Ovary (tissue), 10 donors: ENCODE measurements at regions of chr10 and their contacts with region 1.

Region 1: DNA sequence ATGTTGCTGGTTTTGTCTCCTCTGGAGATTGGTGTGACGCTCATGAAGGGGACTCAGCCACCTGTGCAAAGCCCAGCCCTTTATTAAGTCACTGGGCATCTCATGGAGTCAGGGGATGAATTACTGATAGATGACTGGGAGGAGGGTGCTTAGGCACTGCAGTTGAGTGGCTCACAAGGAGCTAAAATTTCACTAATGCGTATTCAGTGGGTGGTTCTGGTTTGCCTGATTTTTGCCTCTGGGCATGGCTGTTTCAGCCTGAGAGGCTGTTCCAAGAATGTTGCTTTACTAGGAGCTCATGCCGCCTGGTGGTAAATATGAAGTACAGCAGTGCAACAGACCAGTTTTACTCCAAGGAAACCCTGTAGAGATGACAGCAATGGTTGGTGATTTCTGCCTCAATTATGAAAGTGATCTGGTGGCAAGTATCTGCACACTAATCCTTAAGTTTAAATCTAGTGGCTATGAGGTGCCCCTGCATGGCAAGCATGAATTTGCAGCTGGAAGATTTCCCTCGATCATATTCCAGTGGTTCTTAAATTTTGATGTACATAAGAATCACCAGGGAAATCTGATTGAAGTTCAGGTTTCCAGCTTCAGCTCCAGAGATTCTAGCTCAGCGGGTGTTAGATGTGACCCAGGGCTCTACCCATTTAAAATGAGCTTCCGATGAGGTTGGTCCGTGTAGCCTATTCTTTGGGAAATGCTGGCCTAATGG is 19.9 kb downstream of the ACTA2 start:
- DNase-seq: peak in 4 of 5 donors; percentile 46 to 71 (median 52)
- H3K4me3 ChIP-seq: no peak overlapping the region
- H3K27ac ChIP-seq: peak overlapping the region in 1 of 2 donors; percentile 28
- H3K4me1 ChIP-seq: no peaks in the 10 kb centered on the region
- H3K27me3 ChIP-seq: no peaks in the 10 kb centered on the region
- CTCF ChIP-seq: peak; percentile 83 to 98 (median 91)
- EP300 ChIP-seq: no peak
- POLR2A ChIP-seq: no peak

Region 2: DNA sequence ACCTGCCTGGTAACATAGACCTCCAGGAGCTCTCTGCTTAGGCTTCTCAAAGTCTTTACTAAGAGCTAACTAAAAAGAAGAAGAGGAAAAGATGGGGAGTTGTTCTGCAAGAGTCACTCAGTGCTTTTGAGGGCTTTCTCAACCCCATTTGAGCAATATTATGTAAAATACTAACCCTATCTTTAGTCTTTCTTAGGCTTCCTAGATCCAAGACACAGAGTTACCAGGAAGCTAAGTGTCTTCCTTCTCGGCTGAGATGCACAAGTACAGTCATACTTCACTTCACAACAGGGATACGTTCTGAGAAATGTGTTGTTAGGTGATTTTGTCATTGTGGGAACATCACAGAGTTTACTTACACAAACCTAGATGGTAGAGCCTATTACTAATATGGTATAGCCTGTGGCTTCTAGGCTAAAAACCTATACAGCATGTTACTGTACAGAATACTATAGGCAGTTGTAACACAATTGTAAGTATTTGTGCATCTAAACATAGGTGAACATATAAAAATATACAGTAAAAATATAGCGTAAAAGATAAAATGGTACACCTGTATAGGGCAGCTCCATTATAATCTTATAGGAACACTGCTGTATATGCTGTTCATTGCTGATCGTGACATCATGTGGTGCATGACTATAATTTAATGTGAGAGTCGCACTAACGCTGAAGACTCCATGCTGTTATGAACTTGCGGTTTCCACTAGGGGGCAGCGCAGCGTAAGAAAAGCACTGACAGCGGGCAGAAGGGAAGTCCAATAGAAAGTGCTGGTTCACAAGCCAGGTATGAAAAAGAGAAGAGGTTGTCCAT is 97.4 kb before region 1 on chr10:
- intact Hi-C with region 1: loop called (anchors 2 to 5 kb)
- DNase-seq: peak; percentile 78 to 91 (median 88)
- H3K4me3 ChIP-seq: no peak overlapping the region
- H3K27ac ChIP-seq: no peak overlapping the region
- H3K4me1 ChIP-seq: no peaks in the 10 kb centered on the region
- H3K27me3 ChIP-seq: no peaks in the 10 kb centered on the region
- CTCF ChIP-seq: peak; percentile 76 to 93 (median 91)
- EP300 ChIP-seq: no peak
- POLR2A ChIP-seq: peak; percentile 25

Region 3: GRCh38 chr10:88880282-88881076 is 52.2 kb before region 1 on chr10:
- intact Hi-C with region 1: loop called in 3 of 4 experiments (anchors 5 kb)
- DNase-seq: peak; percentile 75 to 88 (median 82)
- H3K4me3 ChIP-seq: peak overlapping the region; percentile 86
- H3K27ac ChIP-seq: peak overlapping the region; percentile 93 to 94
- H3K4me1 ChIP-seq: peaks cover 8% of the 10 kb centered on the region
- H3K27me3 ChIP-seq: no peaks in the 10 kb centered on the region
- CTCF ChIP-seq: peak in 1 of 3 donors; percentile 3
- EP300 ChIP-seq: no peak
- POLR2A ChIP-seq: peak; percentile 55

Region 4: DNA sequence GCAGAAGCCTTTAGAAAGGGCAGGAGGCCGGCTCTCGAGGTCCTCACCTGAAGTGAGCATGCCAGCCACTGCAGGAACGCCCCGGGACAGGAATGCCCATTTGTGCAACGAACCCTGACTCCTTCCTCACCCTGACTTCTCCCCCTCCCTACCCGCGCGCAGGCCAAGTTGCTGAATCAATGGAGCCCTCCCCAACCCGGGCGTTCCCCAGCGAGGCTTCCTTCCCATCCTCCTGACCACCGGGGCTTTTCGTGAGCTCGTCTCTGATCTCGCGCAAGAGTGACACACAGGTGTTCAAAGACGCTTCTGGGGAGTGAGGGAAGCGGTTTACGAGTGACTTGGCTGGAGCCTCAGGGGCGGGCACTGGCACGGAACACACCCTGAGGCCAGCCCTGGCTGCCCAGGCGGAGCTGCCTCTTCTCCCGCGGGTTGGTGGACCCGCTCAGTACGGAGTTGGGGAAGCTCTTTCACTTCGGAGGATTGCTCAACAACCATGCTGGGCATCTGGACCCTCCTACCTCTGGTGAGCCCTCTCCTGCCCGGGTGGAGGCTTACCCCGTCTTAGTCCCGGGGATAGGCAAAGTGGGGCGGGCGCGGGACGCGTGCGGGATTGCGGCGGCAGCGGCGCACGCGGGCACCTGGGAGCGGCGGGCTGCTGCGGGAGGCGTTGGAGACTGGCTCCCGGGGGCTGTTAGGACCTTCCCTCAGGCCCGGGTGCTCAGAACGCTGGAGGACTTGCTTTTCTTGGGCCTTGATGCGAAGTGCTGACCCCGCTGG is 57.9 kb after region 1 on chr10 and contains the start of gene FAS:
- intact Hi-C with region 1: loop called (anchors 2 to 5 kb)
- DNase-seq: peak; percentile 67 to 80 (median 77)
- H3K4me3 ChIP-seq: peak within 1 kb of the TSS; percentile 88
- H3K27ac ChIP-seq: peak within 1 kb of the TSS; percentile 99 to 100
- H3K4me1 ChIP-seq: peaks cover 7% of the 10 kb centered on the region
- H3K27me3 ChIP-seq: no peaks in the 10 kb centered on the region
- CTCF ChIP-seq: peak in 1 of 3 donors; percentile 1
- EP300 ChIP-seq: no peak
- POLR2A ChIP-seq: no peak
- total RNA-seq, gene FAS: 41.4 to 75.9 (median 46.5) TPM

Region 5: GRCh38 chr10:89207181-89207800 is 274.6 kb after region 1 on chr10 and contains the start of gene CH25H:
- intact Hi-C with region 1: loop called in 3 of 4 experiments (anchors 2 to 5 kb)
- DNase-seq: peak; percentile 73 to 88 (median 77)
- H3K4me3 ChIP-seq: peak within 1 kb of the TSS; percentile 47
- H3K27ac ChIP-seq: peak within 1 kb of the TSS; percentile 34 to 76
- H3K4me1 ChIP-seq: peaks cover 2% of the 10 kb centered on the region
- H3K27me3 ChIP-seq: no peaks in the 10 kb centered on the region
- CTCF ChIP-seq: no peak
- EP300 ChIP-seq: no peak
- POLR2A ChIP-seq: peak; percentile 46
- total RNA-seq, gene CH25H: 0.52 to 3.8 (median 1.6) TPM

Region 6: DNA sequence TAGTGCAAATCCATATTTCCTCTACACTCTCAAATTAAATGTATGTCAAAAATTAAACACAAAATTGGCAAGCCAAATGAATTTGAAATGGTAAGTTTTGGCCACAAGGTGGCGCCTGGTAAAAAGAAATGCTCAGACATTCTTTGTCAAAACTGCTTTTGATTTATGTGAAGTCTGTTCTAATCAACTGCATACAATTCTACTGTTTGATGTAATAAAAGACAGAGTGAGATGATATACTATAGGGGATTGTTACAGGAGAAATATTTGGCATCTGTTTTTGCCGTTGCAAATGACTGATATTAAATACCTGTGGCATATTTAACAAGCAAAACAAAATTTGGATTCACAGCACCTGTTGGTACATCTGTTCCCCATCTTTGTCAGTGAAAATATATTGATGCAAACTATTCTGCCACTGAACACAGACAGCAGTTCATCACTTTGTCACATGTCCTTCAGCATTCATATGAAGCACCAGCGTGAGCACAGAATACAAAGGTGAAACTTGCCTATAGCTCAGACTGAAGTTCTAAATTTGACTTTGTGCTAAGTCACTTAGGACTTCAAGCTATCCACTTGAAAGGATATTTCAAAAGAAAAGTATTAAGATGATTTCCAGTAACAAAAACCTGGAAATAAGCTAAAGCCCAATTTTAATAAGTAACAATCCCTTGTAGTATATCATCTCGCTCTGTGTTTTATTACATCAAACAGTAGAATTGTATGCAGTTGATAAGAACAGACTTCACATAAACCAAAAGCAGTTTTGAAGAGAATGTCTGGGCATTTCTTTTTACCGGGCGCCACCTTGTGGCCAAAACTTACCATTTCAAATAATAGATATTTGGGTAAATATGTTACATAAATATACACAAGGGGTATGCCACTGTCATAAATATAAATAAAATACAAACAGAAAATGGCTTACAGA is 284.6 kb after region 1 on chr10:
- intact Hi-C with region 1: loop called in 2 of 4 experiments (anchors 5 kb)
- DNase-seq: peak; percentile 33 to 75 (median 62)
- H3K4me3 ChIP-seq: no peak overlapping the region
- H3K27ac ChIP-seq: peak overlapping the region in 1 of 2 donors; percentile 53
- H3K4me1 ChIP-seq: peaks cover 2% of the 10 kb centered on the region
- H3K27me3 ChIP-seq: no peaks in the 10 kb centered on the region
- CTCF ChIP-seq: peak; percentile 61 to 86 (median 78)
- EP300 ChIP-seq: no peak
- POLR2A ChIP-seq: no peak

Region 7: DNA sequence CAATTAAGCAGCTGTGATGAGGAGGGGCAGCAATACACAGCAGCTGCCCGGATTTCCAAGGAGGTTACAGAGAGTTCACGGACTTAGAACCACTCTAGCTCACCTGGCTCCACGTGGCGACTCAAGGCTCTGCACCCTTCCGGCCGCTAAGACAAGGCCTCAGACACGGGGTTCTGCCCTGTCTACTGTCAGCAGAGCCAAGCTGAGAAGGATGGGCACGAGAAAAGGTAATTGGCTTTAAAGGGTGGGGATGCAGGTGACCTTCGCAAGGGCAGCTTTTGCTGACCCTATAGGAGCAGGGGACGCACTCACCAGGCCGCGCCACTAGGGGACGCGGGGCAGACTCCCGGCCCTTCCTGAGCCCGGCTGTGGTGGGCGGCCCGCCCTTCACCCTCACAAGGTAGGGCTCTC is 921.1 kb after region 1 on chr10:
- intact Hi-C with region 1: no loop called
- DNase-seq: no peak
- H3K4me3 ChIP-seq: no peak overlapping the region
- H3K27ac ChIP-seq: no peak overlapping the region
- H3K4me1 ChIP-seq: no peaks in the 10 kb centered on the region
- H3K27me3 ChIP-seq: no peaks in the 10 kb centered on the region
- CTCF ChIP-seq: no peak
- EP300 ChIP-seq: no peak
- POLR2A ChIP-seq: no peak